Caco-2 (cell line): ENCODE measurements at regions of chr16 and their contacts with region 1.

Region 1: GRCh38 chr16:3023669-3024478 is at the starts of genes HCFC1R1 and THOC6:
- DNase-seq: peak; percentile 95 to 97
- H3K4me3 ChIP-seq: peak within 1 kb of the TSS; percentile 69
- H3K4me3 Mint-ChIP-seq: peak within 1 kb of the TSS; percentile 72
- H3K27ac Mint-ChIP-seq: peak within 1 kb of the TSS; percentile 89
- H3K4me1 ChIP-seq: peaks cover 26% of the 10 kb centered on the region
- H3K4me1 Mint-ChIP-seq: peaks cover 24% of the 10 kb centered on the region
- H3K27me3 ChIP-seq: no peaks in the 10 kb centered on the region
- H3K27me3 Mint-ChIP-seq: no peaks in the 10 kb centered on the region
- CTCF ChIP-seq: no peak
- total RNA-seq, gene HCFC1R1: 40.8 and 44.9 TPM in 2 replicates
- total RNA-seq, gene THOC6: 46.0 and 48.0 TPM in 2 replicates

Region 2: GRCh38 chr16:2980227-2981086 is 43.4 kb before region 1 on chr16 and contains the start of gene PKMYT1:
- CTCF ChIA-PET with region 1: interaction called, 6 read pairs
- POLR2A ChIA-PET with region 1: interaction called, 5 read pairs
- intact Hi-C with region 1: loop called (anchors 1 kb)
- DNase-seq: peak; percentile 87 to 95
- H3K4me3 ChIP-seq: peak within 1 kb of the TSS; percentile 82
- H3K4me3 Mint-ChIP-seq: peak within 1 kb of the TSS; percentile 91
- H3K27ac Mint-ChIP-seq: peak within 1 kb of the TSS; percentile 80
- H3K4me1 ChIP-seq: peaks cover 16% of the 10 kb centered on the region
- H3K4me1 Mint-ChIP-seq: no peaks in the 10 kb centered on the region
- H3K27me3 ChIP-seq: no peaks in the 10 kb centered on the region
- H3K27me3 Mint-ChIP-seq: no peaks in the 10 kb centered on the region
- CTCF ChIP-seq: no peak
- total RNA-seq, gene PKMYT1: 63.3 and 73.7 TPM in 2 replicates

Region 3: GRCh38 chr16:3003582-3004302 is 20.1 kb before region 1 on chr16:
- CTCF ChIA-PET with region 1: interaction called, 113 read pairs
- POLR2A ChIA-PET with region 1: interaction called, 83 read pairs
- intact Hi-C with region 1: loop called (anchors 1 kb)
- DNase-seq: peak; percentile 98 to 99
- H3K4me3 ChIP-seq: peak overlapping the region; percentile 52
- H3K4me3 Mint-ChIP-seq: peak overlapping the region; percentile 89
- H3K27ac Mint-ChIP-seq: no peak overlapping the region
- H3K4me1 ChIP-seq: peaks cover 35% of the 10 kb centered on the region
- H3K4me1 Mint-ChIP-seq: peaks cover 18% of the 10 kb centered on the region
- H3K27me3 ChIP-seq: no peaks in the 10 kb centered on the region
- H3K27me3 Mint-ChIP-seq: no peaks in the 10 kb centered on the region
- CTCF ChIP-seq: peak; percentile 42 to 80

Region 4: DNA sequence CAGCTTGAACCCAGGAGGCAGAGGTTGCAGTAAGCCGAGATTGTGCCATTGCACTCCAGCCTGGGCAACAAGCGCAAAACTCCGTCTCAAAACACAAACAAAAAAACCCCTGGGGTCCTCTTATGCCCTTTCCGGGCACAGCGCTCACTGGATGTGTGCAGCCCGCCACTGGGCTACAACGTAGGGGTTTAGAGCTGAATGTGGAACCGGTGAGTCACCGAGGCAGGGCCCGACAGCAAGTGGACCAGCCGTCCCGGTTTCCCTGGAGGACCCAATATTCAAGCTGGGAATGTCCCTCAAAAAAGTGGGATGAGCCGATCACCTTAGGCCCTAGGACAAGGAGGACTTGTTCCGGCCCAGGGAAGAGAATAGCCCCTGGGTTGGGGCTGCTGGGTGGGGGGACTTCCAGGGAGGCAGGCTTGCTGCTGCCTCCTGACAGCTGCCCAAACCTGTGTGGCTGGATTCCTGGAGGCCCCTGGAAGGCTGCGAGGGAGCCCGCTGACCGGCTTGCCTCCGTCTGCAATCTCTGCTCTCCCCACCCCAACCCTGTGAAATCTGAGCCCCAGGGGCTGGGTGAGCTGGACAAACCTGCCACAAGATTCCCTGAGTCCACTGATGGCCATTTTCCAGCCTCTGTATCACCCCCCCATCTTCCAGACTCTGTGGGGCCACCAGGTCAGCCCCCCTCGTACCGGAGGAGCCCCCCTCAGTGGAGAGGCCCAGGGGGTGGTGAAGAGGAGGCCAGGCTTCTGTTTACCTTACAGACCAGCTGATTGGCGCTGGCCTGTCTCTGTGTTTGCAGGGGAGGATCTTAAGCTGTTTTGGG is 14.1 kb before region 1 on chr16:
- CTCF ChIA-PET with region 1: interaction called, 113 read pairs
- POLR2A ChIA-PET with region 1: interaction called, 83 read pairs
- intact Hi-C with region 1: loop called (anchors 1 kb)
- DNase-seq: peak; percentile 96 to 97
- H3K4me3 ChIP-seq: no peak overlapping the region
- H3K4me3 Mint-ChIP-seq: peak overlapping the region; percentile 45
- H3K27ac Mint-ChIP-seq: peak overlapping the region; percentile 94
- H3K4me1 ChIP-seq: peaks cover 77% of the 10 kb centered on the region
- H3K4me1 Mint-ChIP-seq: peaks cover 27% of the 10 kb centered on the region
- H3K27me3 ChIP-seq: no peaks in the 10 kb centered on the region
- H3K27me3 Mint-ChIP-seq: no peaks in the 10 kb centered on the region
- CTCF ChIP-seq: no peak

Region 5: DNA sequence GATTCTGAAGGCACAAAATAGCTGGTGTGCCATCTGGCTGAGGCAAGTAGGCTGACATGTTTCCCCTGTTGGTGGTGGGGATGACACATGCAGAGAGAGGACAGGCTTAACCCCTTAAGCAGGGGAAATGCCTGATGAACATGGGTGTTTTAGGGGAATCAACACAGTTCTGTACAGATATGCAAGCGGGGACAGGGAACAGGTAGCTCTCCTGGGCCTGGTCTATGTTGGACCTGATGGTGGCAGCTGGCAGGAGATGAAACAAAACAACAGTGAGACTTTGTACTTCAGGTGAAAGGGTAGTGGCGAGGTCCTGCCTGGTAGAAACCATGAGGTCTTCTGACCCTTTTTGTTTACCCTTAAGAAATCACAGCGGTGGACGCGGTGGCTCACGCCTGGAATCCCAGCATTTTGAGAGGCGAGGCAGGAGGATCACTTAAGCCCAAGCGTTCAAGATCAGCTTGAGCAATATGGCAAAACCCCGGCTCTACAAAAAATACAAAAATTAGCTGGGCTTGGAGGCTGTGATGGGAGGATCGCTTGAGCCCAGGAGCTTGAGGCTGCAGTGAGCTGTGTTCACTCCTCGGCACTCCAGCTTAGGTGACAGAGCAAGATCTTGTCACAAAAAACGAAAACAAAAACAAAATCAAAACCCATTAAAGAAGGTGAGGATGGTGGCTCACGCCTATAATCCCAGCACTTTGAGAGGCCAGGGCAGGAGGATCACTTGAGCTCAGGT is 174.6 kb after region 1 on chr16:
- CTCF ChIA-PET with region 1: no interaction called
- POLR2A ChIA-PET with region 1: no interaction called
- intact Hi-C with region 1: no loop called
- DNase-seq: no peak
- H3K4me3 ChIP-seq: no peak overlapping the region
- H3K4me3 Mint-ChIP-seq: no peak overlapping the region
- H3K27ac Mint-ChIP-seq: no peak overlapping the region
- H3K4me1 ChIP-seq: no peaks in the 10 kb centered on the region
- H3K4me1 Mint-ChIP-seq: no peaks in the 10 kb centered on the region
- H3K27me3 ChIP-seq: no peaks in the 10 kb centered on the region
- H3K27me3 Mint-ChIP-seq: peaks cover 3% of the 10 kb centered on the region
- CTCF ChIP-seq: no peak